ENCODE measurements at regions of chr4 and their contacts with region 1.

Region 1: GRCh38 chr4:185096032-185096653 is 46.9 kb upstream of the SLC25A4 start:
- DNase-seq: peak; percentile 58
- H3K4me3 ChIP-seq: no peak overlapping the region
- H3K27ac ChIP-seq: no peak overlapping the region
- H3K4me1 ChIP-seq: no peaks in the 10 kb centered on the region
- H3K27me3 ChIP-seq: no peaks in the 10 kb centered on the region
- CTCF ChIP-seq: peak; percentile 68

Region 2: GRCh38 chr4:184664448-184665210 is 431.5 kb before region 1 on chr4:
- CTCF ChIA-PET with region 1: no interaction called
- POLR2A ChIA-PET with region 1: no interaction called
- intact Hi-C with region 1: no loop called
- DNase-seq: peak; percentile 48
- H3K4me3 ChIP-seq: no peak overlapping the region
- H3K27ac ChIP-seq: no peak overlapping the region
- H3K4me1 ChIP-seq: no peaks in the 10 kb centered on the region
- H3K27me3 ChIP-seq: no peaks in the 10 kb centered on the region
- CTCF ChIP-seq: no peak

Region 3: DNA sequence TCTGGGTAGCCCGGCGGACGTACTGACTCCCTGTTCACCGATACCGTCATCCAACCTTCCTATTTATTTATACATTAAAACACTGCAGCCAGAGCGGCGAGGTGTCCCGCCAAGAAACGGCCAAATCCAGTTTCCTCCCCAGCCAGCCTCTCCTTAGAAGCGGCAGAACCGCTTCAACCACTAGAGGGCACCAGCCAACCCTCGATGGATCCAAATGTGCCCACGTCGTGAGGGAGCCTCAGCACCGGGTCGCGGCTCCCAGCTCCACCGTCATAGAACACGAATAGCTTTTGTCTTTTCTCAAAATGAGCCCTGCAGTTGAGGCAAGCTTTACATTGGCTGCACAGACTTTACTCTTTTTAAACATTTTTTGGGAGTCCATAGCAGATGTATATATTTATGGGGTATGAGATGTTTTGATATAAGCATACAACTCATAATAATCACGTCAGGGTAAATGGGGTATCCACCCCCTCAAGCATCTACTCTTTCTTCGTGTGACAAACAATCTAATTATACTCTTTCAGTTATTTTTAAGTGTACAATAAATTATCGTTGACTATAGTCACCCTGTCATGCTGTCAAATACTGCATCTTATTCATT is 90.8 kb before region 1 on chr4:
- CTCF ChIA-PET with region 1: interaction called, 17 read pairs
- POLR2A ChIA-PET with region 1: no interaction called
- intact Hi-C with region 1: loop called (anchors 10 kb)
- DNase-seq: peak; percentile 86
- H3K4me3 ChIP-seq: peak overlapping the region; percentile 23
- H3K27ac ChIP-seq: no peak overlapping the region
- H3K4me1 ChIP-seq: peaks cover 5% of the 10 kb centered on the region
- H3K27me3 ChIP-seq: peaks cover 23% of the 10 kb centered on the region
- CTCF ChIP-seq: peak; percentile 96

Region 4: DNA sequence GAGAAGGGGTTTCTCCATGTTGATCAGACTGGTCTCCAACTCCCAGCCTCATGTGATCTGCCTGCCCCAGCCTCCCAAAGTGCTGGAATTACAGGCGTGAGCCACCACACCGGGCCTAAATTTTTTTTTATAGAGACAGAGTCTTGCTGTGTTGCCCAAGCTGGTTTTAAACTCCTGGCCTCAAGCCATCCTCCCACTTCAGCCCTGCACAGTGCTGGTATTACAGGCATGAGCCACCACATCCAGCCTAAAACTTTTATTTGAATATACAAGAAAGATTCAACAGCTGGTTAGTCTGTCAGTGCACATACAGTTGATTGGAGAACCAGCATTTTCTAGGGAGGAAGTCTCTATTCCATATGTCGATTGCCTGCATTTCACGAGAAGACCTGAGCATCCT is 208.4 kb after region 1 on chr4:
- CTCF ChIA-PET with region 1: no interaction called
- POLR2A ChIA-PET with region 1: no interaction called
- intact Hi-C with region 1: no loop called
- DNase-seq: no peak
- H3K4me3 ChIP-seq: no peak overlapping the region
- H3K27ac ChIP-seq: no peak overlapping the region
- H3K4me1 ChIP-seq: no peaks in the 10 kb centered on the region
- H3K27me3 ChIP-seq: no peaks in the 10 kb centered on the region
- CTCF ChIP-seq: no peak

Measured in A673 (cell line).